ENCODE measurements at regions of chr3 and their contacts with region 1.

Region 1: DNA sequence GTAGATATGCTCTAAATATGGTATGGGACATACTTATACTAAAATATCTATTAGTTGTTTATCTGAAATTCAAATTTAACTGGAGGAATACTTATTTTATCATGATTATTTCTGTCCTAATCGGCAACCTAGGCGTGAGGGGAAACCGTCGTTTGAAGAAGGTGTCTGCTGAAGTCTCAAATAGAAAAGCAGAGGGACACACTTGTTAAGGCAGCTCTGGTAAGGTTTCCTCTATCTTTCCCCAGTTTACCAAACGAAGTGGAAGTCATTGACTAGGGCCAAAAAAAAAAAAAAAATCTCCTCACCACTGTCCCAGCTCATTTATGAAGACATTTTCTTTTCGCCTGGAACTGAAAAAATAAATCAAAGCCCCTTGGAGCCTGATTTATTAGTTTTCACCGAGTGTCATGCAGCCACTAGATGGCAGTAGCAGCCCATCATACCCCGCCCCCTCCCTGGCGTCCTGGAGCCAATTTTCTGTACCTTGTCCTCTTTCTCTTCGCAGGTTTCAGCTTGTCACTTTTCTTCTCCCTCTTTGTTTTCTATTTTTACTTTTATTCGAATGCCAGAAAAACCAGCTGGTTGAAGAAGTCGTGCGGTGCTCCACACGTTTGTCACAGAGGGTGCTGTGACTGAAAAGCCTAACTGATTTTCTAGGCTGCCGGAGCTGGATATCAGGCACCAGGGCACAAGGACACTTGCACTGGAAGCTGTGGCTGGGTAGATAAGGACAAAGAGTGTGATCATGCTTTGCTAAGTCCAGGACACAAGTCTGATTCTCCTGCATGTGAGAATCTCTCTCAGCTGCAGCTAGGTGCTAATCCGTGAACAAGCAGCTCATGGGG is 238.7 kb downstream of the ZPLD1 start:
- DNase-seq: peak; percentile 70
- ATAC-seq: peak; percentile 67
- H3K4me3 Mint-ChIP-seq: no peak overlapping the region
- H3K27ac Mint-ChIP-seq: no peak overlapping the region
- H3K4me1 Mint-ChIP-seq: peaks cover 3% of the 10 kb centered on the region
- H3K27me3 Mint-ChIP-seq: peaks cover 2% of the 10 kb centered on the region

Region 2: GRCh38 chr3:102691507-102691906 is 18.0 kb after region 1 on chr3:
- CTCF ChIA-PET with region 1: interaction called, 20 read pairs
- POLR2A ChIA-PET with region 1: no interaction called
- DNase-seq: no peak
- ATAC-seq: no peak
- H3K4me3 Mint-ChIP-seq: no peak overlapping the region
- H3K27ac Mint-ChIP-seq: no peak overlapping the region
- H3K4me1 Mint-ChIP-seq: no peaks in the 10 kb centered on the region
- H3K27me3 Mint-ChIP-seq: no peaks in the 10 kb centered on the region